Right cardiac atrium (tissue), 5 donors: ENCODE measurements at regions of chr3 and their contacts with region 1.

Region 1: DNA sequence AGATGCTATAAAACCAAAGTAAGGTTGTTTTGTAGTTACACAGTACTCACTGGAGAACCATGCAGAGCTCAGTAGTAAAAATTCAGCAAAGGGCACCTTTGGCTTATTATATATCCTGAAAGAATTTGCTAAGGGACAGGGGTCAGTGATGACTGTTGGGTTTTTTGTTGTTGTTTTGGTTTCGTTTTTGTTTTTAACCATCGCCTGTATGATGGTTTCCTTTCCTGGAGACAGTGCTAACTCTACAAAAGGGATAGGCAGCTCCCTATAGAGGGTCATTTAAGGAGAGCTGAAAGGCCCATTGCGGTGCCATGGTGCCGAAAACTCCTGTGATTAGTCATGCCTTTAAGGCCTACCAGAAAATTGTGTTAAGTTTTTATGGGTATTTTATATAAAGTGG is 118.2 kb upstream of the GOLIM4 start:
- DNase-seq: no peak
- ATAC-seq: no peak
- H3K4me3 ChIP-seq: no peak overlapping the region
- H3K27ac ChIP-seq: no peak overlapping the region
- H3K4me1 ChIP-seq: no peaks in the 10 kb centered on the region
- H3K27me3 ChIP-seq: no peaks in the 10 kb centered on the region

Region 2: DNA sequence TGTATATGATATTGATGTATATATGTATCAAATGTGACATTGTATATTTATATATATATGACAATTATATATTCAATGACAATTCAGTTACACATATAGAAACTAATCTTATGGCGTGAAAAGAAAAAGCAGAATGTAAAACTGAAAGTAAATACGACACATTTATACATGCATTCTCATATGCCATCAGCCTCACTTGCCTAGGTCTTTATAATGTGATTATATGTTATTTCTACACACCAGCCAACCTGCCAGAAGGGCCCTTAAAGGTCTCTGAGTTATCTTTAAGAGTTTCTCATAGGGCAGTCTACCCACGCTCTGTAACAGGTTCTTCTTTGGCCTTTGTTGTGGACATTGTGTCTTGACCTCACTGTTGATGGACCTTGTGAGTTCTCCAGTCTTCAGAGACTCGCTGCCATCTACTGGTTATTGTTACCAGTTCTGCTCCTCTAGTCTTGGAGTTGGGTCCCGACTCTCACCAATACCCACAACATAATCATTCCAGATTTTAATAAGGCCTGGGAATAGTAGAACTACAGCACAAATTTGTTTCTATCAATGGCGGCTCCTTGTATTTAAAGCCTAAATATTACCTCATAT is 253.3 kb after region 1 on chr3:
- intact Hi-C with region 1: loop called in 2 of 4 experiments (anchors 5 kb)
- DNase-seq: peak in 1 of 3 donors; percentile 23
- ATAC-seq: peak; percentile 51 to 69
- H3K4me3 ChIP-seq: no peak overlapping the region
- H3K27ac ChIP-seq: no peak overlapping the region
- H3K4me1 ChIP-seq: no peaks in the 10 kb centered on the region
- H3K27me3 ChIP-seq: no peaks in the 10 kb centered on the region

Region 3: DNA sequence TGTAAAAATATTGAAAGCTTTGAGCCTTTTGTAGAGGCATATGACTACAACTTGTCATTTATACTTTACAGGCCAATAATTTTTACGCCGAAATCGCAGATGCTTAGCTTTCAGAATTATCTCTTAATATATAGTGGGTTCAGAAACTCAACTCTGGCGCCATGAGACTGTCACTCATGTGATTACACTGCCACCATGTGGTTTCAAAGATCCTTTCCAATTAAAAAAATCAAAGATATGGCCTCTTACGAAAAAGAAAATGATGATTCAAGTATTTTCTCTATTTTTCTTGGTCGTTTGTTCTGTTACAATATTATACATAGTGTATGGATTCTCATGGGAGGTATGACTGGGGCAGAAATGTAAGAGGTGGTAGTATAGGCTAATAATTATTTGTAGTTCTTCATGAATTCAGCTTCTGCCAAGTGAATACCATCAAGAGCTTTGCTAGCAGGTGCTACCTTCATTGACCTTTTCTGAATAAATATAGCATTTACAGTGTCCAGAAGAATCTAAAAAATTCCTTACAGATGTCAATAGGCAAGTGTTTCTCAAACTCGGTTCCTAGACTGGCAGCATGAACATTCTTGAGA is 633.5 kb after region 1 on chr3:
- intact Hi-C with region 1: loop called (anchors 5 kb)
- DNase-seq: no peak
- ATAC-seq: no peak
- H3K4me3 ChIP-seq: no peak overlapping the region
- H3K27ac ChIP-seq: no peak overlapping the region
- H3K4me1 ChIP-seq: no peaks in the 10 kb centered on the region
- H3K27me3 ChIP-seq: no peaks in the 10 kb centered on the region